Activated CD8-positive, alpha-beta T cell treated with anti-CD3 and anti-CD28 coated beads for 36 hours (primary cell): ENCODE measurements at regions of chr15 and their contacts with region 1.

Region 1: GRCh38 chr15:59174835-59175831 is 31.5 kb upstream of the LDHAL6B start:
- DNase-seq: peak; percentile 66
- ATAC-seq: peak; percentile 96
- H3K4me3 Mint-ChIP-seq: no peak overlapping the region
- H3K27ac Mint-ChIP-seq: no peak overlapping the region
- H3K4me1 Mint-ChIP-seq: no peaks in the 10 kb centered on the region
- H3K27me3 Mint-ChIP-seq: peaks cover 15% of the 10 kb centered on the region
- CTCF ChIP-seq: peak; percentile 47

Region 2: DNA sequence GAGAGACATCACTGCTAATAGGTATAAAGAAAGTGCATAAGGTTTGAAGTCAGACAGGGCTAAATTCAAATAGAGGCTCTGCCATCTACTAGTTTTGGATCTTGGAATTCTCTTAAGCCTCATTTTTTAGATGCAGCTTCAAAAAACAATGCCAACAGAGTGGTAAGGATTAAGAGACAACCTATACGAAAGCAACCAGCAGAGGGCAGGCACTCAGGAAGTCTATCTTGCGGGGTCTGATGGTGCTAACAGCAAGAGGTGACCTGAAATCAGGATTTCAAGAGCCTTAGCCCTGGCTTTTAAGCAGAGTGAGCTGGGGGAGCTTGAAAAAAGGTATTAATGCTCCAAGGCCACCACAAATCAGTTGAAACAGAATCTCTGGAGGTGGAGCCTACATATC is 72.2 kb after region 1 on chr15:
- CTCF ChIA-PET with region 1: no interaction called
- POLR2A ChIA-PET with region 1: no interaction called
- intact Hi-C with region 1: loop called (anchors 10 kb)
- DNase-seq: peak; percentile 79
- ATAC-seq: peak; percentile 69
- H3K4me3 Mint-ChIP-seq: no peak overlapping the region
- H3K27ac Mint-ChIP-seq: no peak overlapping the region
- H3K4me1 Mint-ChIP-seq: peaks cover 19% of the 10 kb centered on the region
- H3K27me3 Mint-ChIP-seq: peaks cover 2% of the 10 kb centered on the region
- CTCF ChIP-seq: peak; percentile 69